B cell (primary cell): ENCODE measurements at regions of chr10 and their contacts with region 1.

Region 1: GRCh38 chr10:124647421-124648130 is 96.6 kb downstream of the FAM53B start:
- DNase-seq: peak; percentile 80
- ATAC-seq: peak; percentile 78
- H3K4me3 ChIP-seq: peak overlapping the region in 4 of 5 experiments; percentile 15 to 45 (median 26)
- H3K4me3 Mint-ChIP-seq: peak overlapping the region; percentile 85
- H3K27ac ChIP-seq: peak overlapping the region; percentile 71 to 92
- H3K27ac Mint-ChIP-seq: peak overlapping the region; percentile 97
- H3K4me1 ChIP-seq: peaks cover 99 to 100% of the 10 kb centered on the region in 2 donors
- H3K4me1 Mint-ChIP-seq: peaks cover 99% of the 10 kb centered on the region
- H3K27me3 ChIP-seq: no peaks in the 10 kb centered on the region
- H3K27me3 Mint-ChIP-seq: no peaks in the 10 kb centered on the region
- CTCF ChIP-seq: peak; percentile 25

Region 2: GRCh38 chr10:124465003-124465776 is 182.4 kb before region 1 on chr10:
- CTCF ChIA-PET with region 1: no interaction called
- POLR2A ChIA-PET with region 1: no interaction called
- intact Hi-C with region 1: no loop called
- DNase-seq: peak; percentile 66
- ATAC-seq: peak; percentile 35
- H3K4me3 ChIP-seq: peak overlapping the region in 3 of 5 experiments; percentile 13 to 26 (median 23)
- H3K4me3 Mint-ChIP-seq: peak overlapping the region; percentile 64
- H3K27ac ChIP-seq: peak overlapping the region; percentile 67 to 69
- H3K27ac Mint-ChIP-seq: peak overlapping the region; percentile 92
- H3K4me1 ChIP-seq: peaks cover 23 to 35% of the 10 kb centered on the region in 2 donors
- H3K4me1 Mint-ChIP-seq: peaks cover 37% of the 10 kb centered on the region
- H3K27me3 ChIP-seq: no peaks in the 10 kb centered on the region
- H3K27me3 Mint-ChIP-seq: no peaks in the 10 kb centered on the region
- CTCF ChIP-seq: no peak

Region 3: GRCh38 chr10:124697830-124698544 is 50.4 kb after region 1 on chr10:
- CTCF ChIA-PET with region 1: interaction called, 9 read pairs
- POLR2A ChIA-PET with region 1: interaction called, 3 read pairs
- intact Hi-C with region 1: loop called (anchors 5 kb)
- DNase-seq: peak; percentile 73
- ATAC-seq: peak; percentile 40
- H3K4me3 ChIP-seq: peak overlapping the region in 1 of 5 experiments; percentile 7
- H3K4me3 Mint-ChIP-seq: peak overlapping the region; percentile 86
- H3K27ac ChIP-seq: peak overlapping the region; percentile 80 to 91
- H3K27ac Mint-ChIP-seq: peak overlapping the region; percentile 97
- H3K4me1 ChIP-seq: peaks cover 88 to 93% of the 10 kb centered on the region in 2 donors
- H3K4me1 Mint-ChIP-seq: peaks cover 96% of the 10 kb centered on the region
- H3K27me3 ChIP-seq: no peaks in the 10 kb centered on the region
- H3K27me3 Mint-ChIP-seq: no peaks in the 10 kb centered on the region
- CTCF ChIP-seq: no peak

Region 4: DNA sequence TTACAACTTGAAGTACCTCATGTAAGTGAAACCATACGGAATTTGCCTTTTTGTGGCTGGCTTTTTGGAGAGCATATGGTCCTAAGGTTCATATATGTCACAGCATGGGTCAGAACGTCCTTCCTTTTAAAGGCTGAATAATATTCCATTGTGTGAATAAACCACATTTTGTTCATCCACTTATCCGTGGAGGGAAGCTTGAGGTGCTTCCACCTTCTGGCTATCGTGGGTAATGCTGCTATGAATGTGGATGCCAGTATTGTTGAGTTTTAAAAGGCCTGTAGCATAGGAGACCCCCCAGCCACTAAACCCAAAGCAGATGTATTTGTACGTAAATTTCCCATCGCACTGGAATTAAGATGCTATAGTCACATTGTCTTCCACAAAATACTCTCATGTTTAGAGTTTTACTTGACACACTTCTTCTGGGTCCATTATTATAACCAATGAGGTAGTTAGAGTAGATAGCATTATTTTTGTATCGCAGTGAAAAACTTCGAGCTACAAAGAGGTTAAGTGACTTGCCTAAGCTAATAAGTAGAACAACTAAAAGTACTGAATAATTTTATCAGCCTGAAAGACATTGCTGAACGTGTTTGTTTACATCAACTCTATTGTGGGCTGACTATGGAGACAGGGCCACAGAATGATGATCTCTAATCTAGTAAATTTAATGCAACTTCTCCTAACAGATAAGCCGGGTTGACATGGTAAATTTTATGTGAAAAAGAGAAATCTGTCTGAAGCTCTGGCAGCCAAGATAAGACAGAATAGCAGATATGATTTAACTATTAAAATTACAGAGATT is 695.7 kb after region 1 on chr10:
- CTCF ChIA-PET with region 1: no interaction called
- POLR2A ChIA-PET with region 1: no interaction called
- intact Hi-C with region 1: no loop called
- DNase-seq: peak; percentile 6
- ATAC-seq: no peak
- H3K4me3 ChIP-seq: no peak overlapping the region
- H3K4me3 Mint-ChIP-seq: no peak overlapping the region
- H3K27ac ChIP-seq: no peak overlapping the region
- H3K27ac Mint-ChIP-seq: no peak overlapping the region
- H3K4me1 ChIP-seq: no peaks in the 10 kb centered on the region
- H3K4me1 Mint-ChIP-seq: peaks cover 5% of the 10 kb centered on the region
- H3K27me3 ChIP-seq: peaks cover 0 to 8% (median 4%) of the 10 kb centered on the region in 4 experiments
- H3K27me3 Mint-ChIP-seq: peaks cover 28% of the 10 kb centered on the region
- CTCF ChIP-seq: peak; percentile 29